ENCODE measurements at regions of chr15 and their contacts with region 1.

Region 1: DNA sequence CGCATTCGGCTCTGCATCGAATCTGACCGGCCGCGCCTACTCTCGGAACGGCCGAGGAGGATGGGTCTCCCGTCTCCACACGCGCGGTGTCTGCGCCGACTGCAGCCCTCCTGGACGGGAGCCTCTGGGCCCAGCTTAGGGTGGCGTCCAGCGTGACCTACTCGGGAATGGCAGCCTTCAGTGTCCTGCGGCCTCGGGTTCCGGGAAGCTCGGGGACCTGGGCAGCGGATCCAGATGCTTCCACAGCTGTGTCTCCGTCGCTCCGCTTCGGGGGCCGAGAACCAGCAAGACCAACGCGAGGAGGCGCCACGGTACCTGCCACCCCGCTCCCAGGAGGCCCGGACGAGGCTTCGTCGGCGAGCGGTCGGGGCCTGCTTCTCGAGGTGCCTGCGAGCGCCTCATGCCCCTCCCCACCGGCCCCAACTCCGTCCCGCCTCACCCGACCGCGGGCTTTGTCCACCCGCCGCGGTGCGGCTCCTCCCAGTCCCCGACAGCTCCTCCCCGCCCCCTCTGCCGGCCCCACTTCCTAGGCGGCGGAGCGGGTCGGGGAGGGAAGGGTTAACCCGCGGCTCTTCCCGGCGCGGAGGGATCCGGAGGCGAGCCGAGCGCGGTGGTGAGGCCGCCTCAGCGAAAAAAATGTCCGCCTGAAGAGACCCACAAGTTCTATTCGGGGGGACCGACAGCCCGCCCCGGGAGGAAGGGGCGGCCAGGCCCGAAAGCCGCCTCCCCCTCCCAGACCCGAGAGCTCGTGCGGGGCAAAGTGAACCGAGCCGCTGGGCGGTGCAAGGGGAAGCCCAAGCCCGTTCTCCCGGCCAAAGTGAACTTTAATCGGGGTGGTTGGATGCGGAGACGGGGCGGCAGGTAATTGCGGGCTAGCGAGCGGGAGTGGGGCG is at the start of gene TCF12:
- DNase-seq: peak; percentile 95
- H3K4me3 ChIP-seq: peak within 1 kb of the TSS; percentile 80
- H3K27ac ChIP-seq: peak within 1 kb of the TSS; percentile 74
- H3K4me1 ChIP-seq: peaks cover 30% of the 10 kb centered on the region
- CTCF ChIP-seq: peak; percentile 58
- total RNA-seq, gene TCF12: 139 and 214 TPM in 2 replicates

Region 2: DNA sequence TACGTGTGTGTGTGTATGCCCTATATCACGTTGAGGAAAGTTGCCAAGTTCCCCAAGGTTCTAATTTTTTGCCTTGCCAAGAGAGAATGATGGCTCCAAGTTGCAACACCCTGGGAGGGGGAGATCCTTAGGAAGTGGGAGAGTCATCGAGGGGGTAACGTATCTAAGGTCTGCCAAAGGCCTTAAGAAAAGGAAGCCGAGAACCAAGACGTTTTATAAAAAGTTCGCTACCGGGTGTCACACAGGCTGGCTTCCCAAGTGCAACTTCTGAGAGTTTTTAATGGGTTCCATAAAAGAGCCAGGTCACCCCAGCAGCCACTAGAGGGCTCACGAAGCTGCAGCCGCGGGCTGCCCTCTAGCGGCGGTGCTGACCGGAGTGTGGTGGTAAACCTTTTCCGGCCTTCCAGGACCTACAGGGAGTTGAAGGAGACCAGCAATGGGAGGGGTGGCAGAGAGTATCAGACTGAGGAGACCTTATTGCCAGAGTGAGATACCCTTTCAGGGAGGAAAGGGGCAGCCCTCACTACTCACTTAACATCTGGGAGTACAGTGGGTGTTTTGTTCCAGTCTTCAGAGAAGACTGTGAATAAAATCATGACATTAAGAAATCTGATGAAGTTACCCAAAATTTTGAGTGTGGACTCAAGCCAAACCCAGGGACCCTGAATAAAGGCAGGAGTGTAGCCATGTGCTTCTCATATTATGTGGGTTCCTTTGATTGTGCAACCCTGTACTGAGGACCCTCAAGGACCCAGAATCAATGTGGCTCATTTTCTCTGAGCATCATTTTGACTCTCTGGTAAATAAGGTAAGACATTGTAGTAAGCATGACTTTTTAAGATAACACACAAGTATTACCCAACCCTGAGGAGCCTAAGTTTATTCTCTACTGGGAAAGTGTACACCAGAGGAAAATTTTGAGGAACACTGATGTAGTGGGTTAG is 672.1 kb before region 1 on chr15:
- CTCF ChIA-PET with region 1: no interaction called
- POLR2A ChIA-PET with region 1: no interaction called
- intact Hi-C with region 1: loop called (anchors 10 kb)
- DNase-seq: peak; percentile 96
- H3K4me3 ChIP-seq: peak overlapping the region; percentile 88
- H3K27ac ChIP-seq: peak overlapping the region; percentile 76
- H3K4me1 ChIP-seq: peaks cover 26% of the 10 kb centered on the region
- CTCF ChIP-seq: peak; percentile 100

Region 3: DNA sequence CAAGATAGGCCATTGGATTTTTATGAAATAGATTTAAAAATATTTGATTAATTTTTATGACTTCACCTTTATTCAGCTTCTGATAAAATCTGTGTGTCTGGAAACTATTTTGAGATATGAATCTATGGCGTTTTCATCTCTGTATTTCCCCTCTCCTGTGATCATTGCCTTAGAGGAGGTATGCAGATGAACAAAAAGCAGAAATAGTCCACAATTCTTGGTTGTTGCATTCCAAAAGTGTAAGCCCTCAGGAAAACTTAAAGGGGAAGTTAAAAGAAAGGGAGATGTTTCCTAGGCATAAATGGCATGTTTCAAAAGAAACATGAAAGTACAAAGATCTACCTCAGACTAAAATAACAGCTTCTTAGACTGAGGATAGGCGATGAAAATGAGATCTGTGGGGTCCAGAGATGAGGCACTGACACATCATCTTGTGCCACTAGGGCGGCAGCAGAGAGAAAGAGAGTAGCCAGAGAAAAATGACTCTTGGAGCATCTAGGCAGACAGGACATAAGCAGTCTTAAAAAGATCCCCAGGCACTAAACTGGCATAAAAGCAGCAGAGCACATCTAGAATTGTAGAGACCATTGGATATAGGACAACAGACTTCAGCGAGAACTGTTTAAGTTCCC is 632.2 kb before region 1 on chr15:
- CTCF ChIA-PET with region 1: no interaction called
- POLR2A ChIA-PET with region 1: no interaction called
- intact Hi-C with region 1: no loop called
- DNase-seq: peak; percentile 7
- H3K4me3 ChIP-seq: no peak overlapping the region
- H3K27ac ChIP-seq: no peak overlapping the region
- H3K4me1 ChIP-seq: no peaks in the 10 kb centered on the region
- CTCF ChIP-seq: peak; percentile 64

Region 4: DNA sequence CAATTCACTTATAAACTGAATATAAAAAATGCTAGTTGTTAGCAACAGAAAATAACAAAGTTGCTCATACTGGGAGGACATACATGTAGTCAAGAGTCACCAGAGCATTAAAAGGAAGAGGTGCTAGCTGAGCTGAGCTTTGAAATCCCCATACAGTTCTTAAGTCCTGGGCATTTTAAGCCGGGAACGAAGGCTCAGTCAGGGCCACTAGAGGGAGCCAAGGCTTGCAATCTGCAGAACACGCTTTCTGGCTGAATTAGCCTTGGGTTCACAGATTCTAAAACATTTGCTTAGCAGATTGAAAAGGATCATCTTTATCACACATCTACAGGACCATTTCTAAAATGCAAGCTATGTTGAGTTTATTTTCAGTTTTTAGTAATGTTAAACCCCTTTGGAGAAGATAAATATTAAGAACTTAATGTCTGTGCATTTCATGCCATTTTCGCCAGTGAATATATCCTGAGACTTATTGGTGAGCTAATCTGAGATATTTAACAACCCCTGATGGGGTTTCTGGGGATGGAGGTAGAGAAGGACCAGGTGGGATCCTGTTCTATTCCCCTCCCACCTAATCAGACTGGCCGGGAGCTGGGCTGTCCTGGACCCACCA is 427.1 kb before region 1 on chr15:
- CTCF ChIA-PET with region 1: no interaction called
- POLR2A ChIA-PET with region 1: no interaction called
- intact Hi-C with region 1: loop called (anchors 2 kb)
- DNase-seq: peak; percentile 89
- H3K4me3 ChIP-seq: no peak overlapping the region
- H3K27ac ChIP-seq: no peak overlapping the region
- H3K4me1 ChIP-seq: peaks cover under 1% of the 10 kb centered on the region
- CTCF ChIP-seq: peak; percentile 98

Region 5: DNA sequence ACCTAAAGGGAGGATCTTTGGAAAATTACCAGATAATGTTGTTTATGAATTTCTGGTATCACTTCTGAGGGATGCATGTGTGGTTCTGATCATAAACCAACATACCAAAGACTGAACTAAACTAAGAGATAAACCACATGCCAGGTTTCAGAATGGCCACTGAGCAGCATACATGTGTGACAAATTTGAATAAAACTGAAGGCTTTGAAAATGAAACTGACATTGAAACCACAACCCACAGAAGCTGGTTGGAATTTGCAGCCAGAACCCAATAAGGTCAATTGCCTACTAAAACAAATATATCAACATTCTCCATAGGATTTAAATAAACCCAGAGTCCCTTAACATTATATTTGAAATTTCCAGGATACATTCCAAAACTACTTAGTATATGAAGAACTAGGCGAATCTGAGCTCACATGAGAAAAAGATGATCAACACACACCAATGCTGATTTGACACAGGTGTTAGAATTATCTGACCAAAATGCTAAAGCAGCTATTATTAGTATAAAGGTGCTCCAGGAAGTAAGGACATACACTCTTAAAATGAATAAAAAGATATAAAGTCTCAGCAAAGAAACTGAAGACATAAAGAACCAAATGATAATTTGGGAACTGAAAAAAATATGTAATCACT is 310.0 kb before region 1 on chr15:
- CTCF ChIA-PET with region 1: no interaction called
- POLR2A ChIA-PET with region 1: no interaction called
- intact Hi-C with region 1: loop called (anchors 2 kb)
- DNase-seq: peak; percentile 87
- H3K4me3 ChIP-seq: peak overlapping the region; percentile 62
- H3K27ac ChIP-seq: peak overlapping the region; percentile 98
- H3K4me1 ChIP-seq: peaks cover 66% of the 10 kb centered on the region
- CTCF ChIP-seq: no peak

Region 6: DNA sequence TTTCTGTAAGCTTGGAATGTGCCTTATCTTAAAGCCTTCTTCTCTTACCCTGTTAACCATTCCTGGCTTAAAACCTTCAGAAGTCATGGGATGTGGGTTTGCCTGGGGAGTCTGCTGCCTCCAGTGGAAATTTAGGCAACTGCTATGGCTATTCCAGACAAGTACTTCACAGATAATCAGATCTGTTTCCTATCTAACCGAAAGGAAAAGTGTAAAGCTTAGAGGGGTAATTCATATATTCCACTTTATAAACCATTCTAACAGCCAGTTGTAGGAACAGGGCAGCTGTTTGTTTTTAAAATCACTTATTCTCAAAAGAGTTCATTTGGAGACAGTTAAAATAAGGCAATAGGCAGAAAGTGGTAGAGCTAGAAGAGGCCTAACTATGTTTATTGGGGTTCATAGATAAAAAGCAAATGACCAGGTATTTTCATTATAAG is 220.1 kb after region 1 on chr15:
- CTCF ChIA-PET with region 1: no interaction called
- POLR2A ChIA-PET with region 1: no interaction called
- intact Hi-C with region 1: loop called (anchors 5 kb)
- DNase-seq: peak; percentile 24
- H3K4me3 ChIP-seq: no peak overlapping the region
- H3K27ac ChIP-seq: no peak overlapping the region
- H3K4me1 ChIP-seq: no peaks in the 10 kb centered on the region
- CTCF ChIP-seq: peak; percentile 79